Ascending aorta (tissue), 2 donors: ENCODE measurements at regions of chr6 and their contacts with region 1.

Region 1: DNA sequence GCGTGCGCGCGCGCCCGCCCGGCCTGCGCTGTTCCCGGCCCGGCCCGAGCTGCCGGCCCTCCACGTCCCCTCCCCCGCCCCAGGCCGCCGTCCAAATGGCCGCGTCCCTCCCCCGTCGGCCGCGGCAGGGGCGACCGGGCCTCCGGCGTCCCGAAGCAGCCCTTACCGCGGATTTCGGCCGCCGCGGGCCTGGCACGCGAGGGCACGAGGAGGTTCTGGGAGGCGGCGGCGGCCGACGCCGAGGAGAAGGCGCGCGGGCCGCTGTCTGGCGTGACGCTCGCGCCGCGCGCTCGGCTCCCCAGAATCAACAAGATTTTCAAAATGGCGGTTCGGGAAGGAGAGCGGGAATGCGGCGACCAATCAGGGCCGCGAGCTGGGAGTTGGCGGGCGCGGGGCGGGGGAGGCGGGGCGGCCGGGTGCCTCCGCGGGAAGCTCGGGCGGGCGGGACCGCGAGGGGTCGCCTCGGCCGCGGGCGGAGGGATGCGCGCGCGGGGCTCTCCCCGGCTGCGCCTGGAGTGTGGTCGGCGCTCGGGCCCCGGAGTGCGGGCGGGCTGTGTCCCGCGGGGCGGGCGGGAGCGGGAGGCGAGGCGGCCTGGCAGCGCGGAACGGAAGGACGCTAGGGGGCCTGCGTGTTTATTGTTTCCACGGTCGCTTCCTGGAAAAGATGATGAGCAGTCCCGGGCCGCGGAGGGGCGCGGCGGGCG is at the start of gene DEK:
- DNase-seq: peak; percentile 31 to 92
- H3K4me3 ChIP-seq: peak within 1 kb of the TSS; percentile 88 to 100
- H3K27ac ChIP-seq: peak within 1 kb of the TSS; percentile 94 to 99
- H3K4me1 ChIP-seq: peaks cover 0 to 12% of the 10 kb centered on the region in 2 donors
- H3K27me3 ChIP-seq: no peaks in the 10 kb centered on the region
- CTCF ChIP-seq: peak; percentile 32 to 50 (median 44)
- total RNA-seq, gene DEK: 51.2 TPM

Region 2: DNA sequence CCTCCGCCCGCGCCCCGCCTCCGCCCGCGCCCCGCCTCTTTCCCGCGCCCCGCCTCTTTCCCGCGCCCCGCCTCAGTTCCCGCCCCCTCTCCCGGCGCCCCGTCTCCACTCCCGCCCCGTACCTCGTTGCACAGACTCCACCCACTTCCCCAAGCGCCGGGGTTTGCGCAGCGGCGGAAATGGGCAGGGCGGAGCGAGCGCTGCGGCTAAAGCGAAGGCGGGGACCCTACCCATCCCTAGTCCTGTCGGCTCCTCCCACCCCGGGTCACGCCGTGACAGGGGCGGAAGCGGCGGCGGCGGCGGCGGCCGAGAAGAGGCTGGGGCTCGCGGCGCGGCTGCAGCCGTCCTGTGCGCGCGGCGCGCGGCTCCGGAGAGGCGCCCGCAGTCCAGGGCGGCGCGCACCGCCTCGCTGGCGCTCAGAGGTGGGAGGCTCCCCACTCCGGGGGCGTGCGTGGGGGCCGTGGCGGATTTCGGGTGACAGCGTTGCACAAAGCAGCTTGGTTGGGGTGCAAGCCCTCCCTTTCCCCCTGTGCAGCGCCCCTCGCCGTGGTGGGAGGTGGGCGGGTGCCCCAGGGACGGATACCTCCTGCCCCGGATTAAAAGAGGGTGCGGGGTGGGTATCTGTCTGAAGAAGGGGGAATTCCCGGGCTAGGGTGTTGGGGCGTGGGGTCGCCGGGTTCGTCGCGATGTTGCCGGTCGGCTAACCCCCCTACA is 109.1 kb before region 1 on chr6 and contains the start of gene KDM1B:
- intact Hi-C with region 1: loop called (anchors 1 kb)
- DNase-seq: peak; percentile 91 to 99
- H3K4me3 ChIP-seq: peak within 1 kb of the TSS; percentile 89 to 94
- H3K27ac ChIP-seq: peak within 1 kb of the TSS; percentile 75 to 88
- H3K4me1 ChIP-seq: peaks cover 4 to 12% of the 10 kb centered on the region in 2 donors
- H3K27me3 ChIP-seq: no peaks in the 10 kb centered on the region
- CTCF ChIP-seq: no peak
- total RNA-seq, gene KDM1B: 4.9 TPM

Region 3: DNA sequence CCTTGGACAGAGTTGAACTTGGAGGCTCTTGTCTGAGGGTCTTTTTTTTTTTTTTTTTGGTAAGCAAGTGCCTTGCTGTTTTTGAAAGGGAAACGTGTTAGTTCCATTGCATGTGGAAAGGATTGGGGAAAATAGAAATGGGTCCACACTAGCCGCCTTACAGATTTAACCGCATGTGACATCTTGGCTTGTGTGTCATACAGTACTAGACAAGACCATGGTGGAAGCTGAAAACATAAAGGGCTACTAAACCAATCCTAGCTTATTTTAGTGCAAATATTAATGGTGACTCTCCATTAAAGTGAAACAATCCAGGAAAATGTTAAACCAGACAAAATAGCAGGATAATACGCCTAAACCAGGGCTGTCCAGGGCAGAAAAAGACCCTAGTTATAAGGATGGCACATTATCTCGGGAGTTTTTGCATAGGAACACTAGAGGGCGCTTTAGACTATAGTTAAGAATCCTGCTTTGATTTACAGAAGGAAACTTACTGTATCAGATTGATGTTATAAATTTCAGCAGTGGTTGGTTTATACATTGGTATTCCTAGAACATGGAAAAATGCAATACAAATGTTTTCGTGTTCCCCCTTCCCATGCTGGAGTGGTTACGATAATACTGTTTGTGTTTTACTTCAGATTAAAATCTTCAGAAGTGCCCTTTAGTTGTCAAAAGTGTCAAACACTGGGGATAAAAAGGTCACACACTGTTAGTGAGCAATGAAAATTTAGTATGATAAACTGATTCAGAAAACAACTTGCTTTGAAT is 59.7 kb after region 1 on chr6:
- intact Hi-C with region 1: loop called (anchors 5 kb)
- DNase-seq: no peak
- H3K4me3 ChIP-seq: no peak overlapping the region
- H3K27ac ChIP-seq: no peak overlapping the region
- H3K4me1 ChIP-seq: peaks cover 0 to 7% of the 10 kb centered on the region in 2 donors
- H3K27me3 ChIP-seq: no peaks in the 10 kb centered on the region
- CTCF ChIP-seq: peak; percentile 71 to 84 (median 74)

Region 4: GRCh38 chr6:18387061-18387721 is 122.8 kb after region 1 on chr6 and contains the start of gene RNF144B:
- intact Hi-C with region 1: loop called (anchors 10 kb)
- DNase-seq: peak; percentile 62 to 87
- H3K4me3 ChIP-seq: peak within 1 kb of the TSS; percentile 52 to 67
- H3K27ac ChIP-seq: peak within 1 kb of the TSS; percentile 39 to 63
- H3K4me1 ChIP-seq: peaks cover 0 to 26% of the 10 kb centered on the region in 2 donors
- H3K27me3 ChIP-seq: no peaks in the 10 kb centered on the region
- CTCF ChIP-seq: no peak
- total RNA-seq, gene RNF144B: 52.3 TPM

Region 5: DNA sequence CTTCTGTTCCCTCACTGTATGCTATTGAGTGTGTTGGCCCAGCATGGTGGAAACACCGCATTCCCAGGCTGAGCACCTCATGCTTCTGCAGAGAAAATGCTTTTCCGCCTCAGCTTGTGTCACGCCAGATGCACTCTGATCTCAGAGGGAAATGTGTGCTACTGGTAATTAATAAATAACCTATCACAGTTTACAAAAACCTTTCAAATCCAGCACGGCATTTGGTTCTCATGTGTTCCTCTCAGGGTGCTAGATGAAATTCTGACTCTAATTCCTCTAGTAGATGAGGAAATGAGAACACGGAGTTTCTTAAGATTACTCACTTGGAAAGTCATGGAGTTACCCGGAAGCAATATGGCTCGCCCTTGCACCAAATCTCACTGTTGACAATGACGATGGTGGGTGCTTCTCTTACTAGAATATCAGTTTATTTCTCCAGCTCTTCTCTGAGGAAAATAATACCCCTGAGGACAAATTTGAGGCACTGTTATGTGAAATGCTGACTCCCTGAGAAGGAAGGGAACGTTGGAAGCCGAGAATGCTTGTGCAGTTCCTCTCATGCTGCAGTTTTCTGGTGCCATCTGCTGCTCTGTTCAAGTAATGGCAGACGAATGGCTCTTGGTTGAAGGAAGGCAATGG is 239.3 kb after region 1 on chr6:
- intact Hi-C with region 1: loop called (anchors 1 kb)
- DNase-seq: peak in 1 of 2 donors; percentile 78
- H3K4me3 ChIP-seq: peak overlapping the region; percentile 32 to 55
- H3K27ac ChIP-seq: no peak overlapping the region
- H3K4me1 ChIP-seq: no peaks in the 10 kb centered on the region
- H3K27me3 ChIP-seq: no peaks in the 10 kb centered on the region
- CTCF ChIP-seq: peak; percentile 81 to 95 (median 93)

Region 6: DNA sequence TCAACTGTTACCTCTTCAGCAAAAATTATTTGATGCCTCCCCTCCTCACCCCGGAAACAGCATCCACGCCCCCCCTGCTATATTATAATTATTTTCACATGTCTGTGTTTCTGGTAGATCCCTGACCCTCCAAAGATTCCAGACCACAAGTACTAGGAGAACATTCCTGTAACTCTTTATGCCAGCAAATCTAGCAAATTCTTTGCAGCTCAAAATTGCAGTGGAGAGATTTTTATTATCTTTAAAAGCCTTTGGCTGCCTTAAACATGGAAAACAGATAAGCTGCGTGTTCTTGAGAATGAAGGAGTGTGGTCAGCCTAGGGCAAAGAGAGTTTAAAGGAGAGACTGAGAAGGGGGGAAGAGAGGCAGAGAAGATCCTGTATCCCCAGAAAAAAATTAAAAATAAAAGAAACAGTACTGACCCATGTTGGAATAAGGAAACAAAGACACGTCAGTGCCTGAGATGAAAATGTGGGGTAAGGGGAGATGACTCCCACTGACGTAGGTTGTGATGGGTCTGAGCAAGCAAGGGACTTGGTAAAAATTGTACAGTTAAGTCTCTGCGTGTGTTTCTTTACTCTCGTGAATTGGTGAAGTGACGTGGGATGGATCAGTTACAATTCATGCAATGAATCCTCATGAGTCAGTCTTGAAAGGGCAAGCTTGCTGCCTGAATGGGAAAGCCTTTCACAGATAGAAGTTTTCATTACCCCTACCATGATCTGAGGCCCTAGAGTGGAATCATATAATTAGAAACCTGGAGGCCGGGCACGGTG is 1581.1 kb after region 1 on chr6:
- intact Hi-C with region 1: loop called (anchors 10 kb)
- DNase-seq: no peak
- H3K4me3 ChIP-seq: peak overlapping the region; percentile 13 to 24
- H3K27ac ChIP-seq: peak overlapping the region; percentile 96
- H3K4me1 ChIP-seq: peaks cover 0 to 24% of the 10 kb centered on the region in 2 donors
- H3K27me3 ChIP-seq: no peaks in the 10 kb centered on the region
- CTCF ChIP-seq: no peak